ENCODE measurements at regions of chr15 and their contacts with region 1.

Region 1: GRCh38 chr15:72199711-72200212 is 2.2 kb upstream of the GRAMD2A start:
- DNase-seq: peak; percentile 78 to 81
- H3K4me3 ChIP-seq: no peak overlapping the region
- H3K4me3 Mint-ChIP-seq: no peak overlapping the region
- H3K27ac Mint-ChIP-seq: no peak overlapping the region
- H3K4me1 ChIP-seq: peaks cover 12% of the 10 kb centered on the region; the same call in 1 of the 2 replicates
- H3K4me1 Mint-ChIP-seq: no peaks in the 10 kb centered on the region
- H3K27me3 ChIP-seq: no peaks in the 10 kb centered on the region
- H3K27me3 Mint-ChIP-seq: peaks cover 2% of the 10 kb centered on the region
- CTCF ChIP-seq: peak; percentile 86 to 90

Region 2: DNA sequence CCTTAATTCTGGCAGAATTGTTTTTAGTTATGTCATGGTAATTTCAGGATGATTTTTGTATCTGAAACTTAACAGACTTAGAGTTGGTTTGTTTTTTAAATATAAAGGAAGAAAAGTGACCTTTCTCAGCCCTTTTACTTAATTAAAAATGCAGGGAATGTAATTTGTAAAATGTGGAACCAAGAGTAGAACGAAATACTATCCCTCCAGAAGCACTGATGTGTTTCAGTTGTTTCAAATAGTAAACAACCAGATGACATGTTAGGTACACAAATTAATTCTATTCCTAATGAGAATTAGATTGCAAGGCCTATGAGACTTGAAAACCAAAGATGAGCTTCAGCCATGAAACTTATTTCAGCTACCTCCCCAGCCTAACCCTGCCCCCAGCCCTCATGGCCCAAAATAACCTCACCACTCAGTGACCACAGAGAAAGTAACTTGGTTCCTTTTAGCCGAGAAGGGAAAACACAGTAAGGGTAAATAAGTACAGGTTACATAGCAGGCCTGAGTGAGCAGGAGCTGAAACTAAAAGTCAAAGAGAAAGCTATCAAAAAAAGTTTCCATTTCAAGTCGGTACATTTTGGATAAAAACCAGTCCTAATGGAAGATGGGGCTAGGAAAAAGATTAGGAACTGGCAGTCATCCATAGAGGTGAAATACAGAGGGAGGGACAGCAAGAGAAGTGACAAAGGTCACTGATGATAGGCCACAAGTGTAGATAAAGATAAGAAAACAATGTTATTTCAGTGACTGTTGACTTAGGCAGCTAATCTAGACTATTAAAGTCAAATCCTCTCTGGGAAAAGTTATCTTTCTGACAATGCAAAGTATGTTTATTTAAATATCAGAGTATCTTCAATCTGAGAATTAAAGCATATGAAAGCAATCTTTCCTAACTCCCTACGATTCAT is 58.3 kb before region 1 on chr15:
- CTCF ChIA-PET with region 1: no interaction called
- POLR2A ChIA-PET with region 1: no interaction called
- intact Hi-C with region 1: no loop called
- DNase-seq: peak in 1 of 2 experiments; percentile 58
- H3K4me3 ChIP-seq: no peak overlapping the region
- H3K4me3 Mint-ChIP-seq: peak overlapping the region; percentile 51
- H3K27ac Mint-ChIP-seq: peak overlapping the region; percentile 34
- H3K4me1 ChIP-seq: peaks cover 33% of the 10 kb centered on the region
- H3K4me1 Mint-ChIP-seq: peaks cover 21% of the 10 kb centered on the region
- H3K27me3 ChIP-seq: no peaks in the 10 kb centered on the region
- H3K27me3 Mint-ChIP-seq: no peaks in the 10 kb centered on the region
- CTCF ChIP-seq: no peak

Region 3: DNA sequence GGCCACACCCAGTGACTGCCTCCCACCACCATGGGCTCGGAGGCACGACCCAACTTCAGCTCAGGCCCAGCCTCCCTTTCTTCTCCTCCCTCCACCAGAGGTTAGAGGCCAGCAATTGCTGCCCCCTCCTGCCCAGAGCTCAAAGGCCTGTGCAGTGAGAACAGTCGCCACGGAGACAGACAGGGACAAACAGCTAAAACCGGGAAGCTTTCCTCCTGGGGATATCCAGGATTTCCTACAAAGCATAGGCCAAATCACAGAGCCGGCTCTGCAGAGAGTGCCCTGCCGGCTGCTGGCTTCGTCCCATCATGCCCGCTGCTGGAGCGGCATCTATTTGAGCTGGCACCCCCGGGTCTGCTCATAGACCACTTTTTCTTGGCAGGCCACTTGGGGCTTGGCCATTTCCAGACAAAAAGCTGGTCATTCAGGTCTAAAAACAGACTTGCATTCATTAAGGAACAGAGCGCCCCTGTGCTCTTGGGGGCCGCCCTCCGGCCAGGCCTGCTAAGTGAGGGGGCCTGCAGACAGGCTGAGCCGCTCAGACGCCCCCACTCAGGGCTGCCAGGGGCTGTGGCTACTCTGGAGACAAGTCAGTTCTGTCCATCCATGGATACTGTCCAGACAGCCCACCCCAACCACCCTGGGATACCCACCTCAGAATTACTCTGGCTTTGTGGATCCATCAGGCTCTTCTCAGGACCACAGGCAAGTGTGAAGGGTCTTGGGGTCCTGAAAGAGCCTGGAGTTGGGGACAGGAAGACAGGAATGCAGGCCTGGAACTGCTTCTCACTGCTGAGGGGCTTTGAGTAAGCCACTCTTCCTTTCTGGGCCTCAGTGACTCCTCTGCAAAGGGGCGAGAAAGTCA is 19.6 kb before region 1 on chr15:
- CTCF ChIA-PET with region 1: no interaction called
- POLR2A ChIA-PET with region 1: no interaction called
- intact Hi-C with region 1: no loop called
- DNase-seq: no peak
- H3K4me3 ChIP-seq: no peak overlapping the region
- H3K4me3 Mint-ChIP-seq: no peak overlapping the region
- H3K27ac Mint-ChIP-seq: no peak overlapping the region
- H3K4me1 ChIP-seq: no peaks in the 10 kb centered on the region
- H3K4me1 Mint-ChIP-seq: peaks cover 5% of the 10 kb centered on the region
- H3K27me3 ChIP-seq: no peaks in the 10 kb centered on the region
- H3K27me3 Mint-ChIP-seq: no peaks in the 10 kb centered on the region
- CTCF ChIP-seq: no peak

Region 4: GRCh38 chr15:72285927-72286516 is 86.3 kb after region 1 on chr15:
- CTCF ChIA-PET with region 1: interaction called, 3 read pairs
- POLR2A ChIA-PET with region 1: no interaction called
- intact Hi-C with region 1: loop called (anchors 1 kb)
- DNase-seq: peak in 1 of 2 experiments; percentile 62
- H3K4me3 ChIP-seq: no peak overlapping the region
- H3K4me3 Mint-ChIP-seq: no peak overlapping the region
- H3K27ac Mint-ChIP-seq: no peak overlapping the region
- H3K4me1 ChIP-seq: no peaks in the 10 kb centered on the region
- H3K4me1 Mint-ChIP-seq: no peaks in the 10 kb centered on the region
- H3K27me3 ChIP-seq: no peaks in the 10 kb centered on the region
- H3K27me3 Mint-ChIP-seq: peaks cover 2% of the 10 kb centered on the region
- CTCF ChIP-seq: peak; percentile 58 to 86